Activated CD8-positive, alpha-beta T cell treated with anti-CD3 and anti-CD28 coated beads for 36 hours (primary cell): ENCODE measurements at regions of chr11 and their contacts with region 1.

Region 1: DNA sequence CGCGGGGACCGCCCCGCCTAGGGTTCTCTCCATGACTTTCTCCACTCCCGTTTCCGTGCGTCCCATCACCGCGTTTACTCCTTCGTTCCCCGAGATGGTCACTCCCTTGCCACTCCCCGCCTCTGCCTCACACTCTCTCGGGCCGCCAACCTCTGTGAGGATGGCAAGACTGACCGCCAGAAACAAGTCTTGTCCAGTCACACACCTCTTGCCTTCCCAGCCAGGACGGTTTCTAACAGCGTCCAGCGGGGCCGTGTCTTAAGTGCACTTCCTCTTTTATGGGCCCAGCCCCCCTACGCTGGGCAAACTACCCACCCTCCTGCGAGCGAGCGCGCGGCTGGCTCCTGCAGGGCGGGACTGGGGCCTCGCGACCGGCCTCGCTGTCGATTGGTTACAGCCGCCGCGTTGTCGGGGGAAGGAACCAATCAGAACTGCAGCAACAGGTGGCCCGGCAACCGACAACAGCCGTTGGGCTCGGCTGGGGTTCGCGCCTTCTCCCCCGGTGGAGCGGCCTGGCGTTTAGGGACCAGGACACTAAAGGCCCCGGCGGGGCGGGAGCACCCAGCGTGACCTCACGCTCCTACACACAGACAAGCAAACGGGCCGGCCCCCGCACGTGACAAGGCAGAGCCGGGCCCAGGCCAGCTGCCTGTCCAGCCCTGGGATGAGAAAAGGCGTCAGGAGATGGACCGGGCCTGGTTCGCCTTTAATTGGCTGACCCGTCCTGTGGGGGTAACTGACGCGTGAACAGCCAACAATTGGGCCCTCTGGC is 512 bp upstream of the UCP2 start:
- DNase-seq: peak; percentile 97
- ATAC-seq: peak; percentile 85
- H3K4me3 Mint-ChIP-seq: peak overlapping the region; percentile 86
- H3K27ac Mint-ChIP-seq: peak overlapping the region; percentile 95
- H3K4me1 Mint-ChIP-seq: peaks cover 41% of the 10 kb centered on the region
- H3K27me3 Mint-ChIP-seq: no peaks in the 10 kb centered on the region
- CTCF ChIP-seq: no peak

Region 2: DNA sequence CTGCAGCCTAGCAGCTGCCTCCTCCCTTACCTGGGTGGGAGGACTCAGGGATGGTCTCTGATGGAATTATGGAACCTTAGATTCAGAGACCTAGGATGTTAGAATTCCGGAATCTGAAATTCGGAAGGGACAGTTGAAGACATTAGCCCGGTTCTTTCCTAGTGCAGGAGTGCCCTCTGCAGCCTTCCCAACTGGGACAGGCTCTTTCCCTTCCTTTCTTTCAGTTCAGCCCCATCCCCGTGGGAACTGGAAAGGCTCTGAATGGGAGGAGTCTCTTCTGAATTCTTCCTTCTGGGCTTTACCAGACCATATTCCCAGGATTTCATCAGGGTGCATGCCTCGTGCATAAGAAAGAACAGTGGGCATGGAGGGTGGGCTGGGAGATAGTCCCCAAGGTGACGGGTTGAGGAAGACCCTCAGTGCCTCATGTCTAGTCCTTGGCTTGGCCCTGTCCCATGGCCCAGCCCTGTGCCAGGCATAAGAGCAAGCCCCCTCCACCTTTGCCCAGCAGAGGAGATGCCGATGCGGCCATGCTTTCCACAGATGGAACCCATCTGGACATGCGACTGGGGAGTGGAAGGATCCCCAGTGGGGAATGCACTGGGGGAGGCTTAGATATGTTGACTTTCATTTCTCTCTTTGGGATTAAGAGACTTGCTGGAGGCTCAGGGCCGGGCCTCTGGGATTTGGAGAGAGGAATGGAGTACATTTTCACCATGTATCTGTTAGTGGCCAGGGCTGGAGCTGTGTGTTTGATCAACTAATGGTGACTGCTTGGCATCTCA is 17.9 kb before region 1 on chr11:
- CTCF ChIA-PET with region 1: interaction called, 17 read pairs
- POLR2A ChIA-PET with region 1: interaction called, 80 read pairs
- intact Hi-C with region 1: no loop called
- DNase-seq: no peak
- ATAC-seq: no peak
- H3K4me3 Mint-ChIP-seq: no peak overlapping the region
- H3K27ac Mint-ChIP-seq: no peak overlapping the region
- H3K4me1 Mint-ChIP-seq: peaks cover 42% of the 10 kb centered on the region
- H3K27me3 Mint-ChIP-seq: no peaks in the 10 kb centered on the region
- CTCF ChIP-seq: no peak

Region 3: GRCh38 chr11:74004759-74005615 is 21.8 kb after region 1 on chr11:
- CTCF ChIA-PET with region 1: interaction called, 7 read pairs
- POLR2A ChIA-PET with region 1: interaction called, 269 read pairs
- intact Hi-C with region 1: no loop called
- DNase-seq: peak; percentile 96
- ATAC-seq: peak; percentile 99
- H3K4me3 Mint-ChIP-seq: peak overlapping the region; percentile 65
- H3K27ac Mint-ChIP-seq: peak overlapping the region; percentile 91
- H3K4me1 Mint-ChIP-seq: peaks cover 82% of the 10 kb centered on the region
- H3K27me3 Mint-ChIP-seq: no peaks in the 10 kb centered on the region
- CTCF ChIP-seq: no peak

Region 4: GRCh38 chr11:74018331-74019005 is 35.3 kb after region 1 on chr11:
- CTCF ChIA-PET with region 1: interaction called, 6 read pairs
- POLR2A ChIA-PET with region 1: interaction called, 269 read pairs
- intact Hi-C with region 1: loop called (anchors 5 kb)
- DNase-seq: no peak
- ATAC-seq: no peak
- H3K4me3 Mint-ChIP-seq: no peak overlapping the region
- H3K27ac Mint-ChIP-seq: no peak overlapping the region
- H3K4me1 Mint-ChIP-seq: peaks cover 34% of the 10 kb centered on the region
- H3K27me3 Mint-ChIP-seq: no peaks in the 10 kb centered on the region
- CTCF ChIP-seq: no peak

Region 5: GRCh38 chr11:74102321-74102720 is 119.2 kb after region 1 on chr11:
- CTCF ChIA-PET with region 1: no interaction called
- POLR2A ChIA-PET with region 1: no interaction called
- intact Hi-C with region 1: no loop called
- DNase-seq: no peak
- ATAC-seq: no peak
- H3K4me3 Mint-ChIP-seq: no peak overlapping the region
- H3K27ac Mint-ChIP-seq: no peak overlapping the region
- H3K4me1 Mint-ChIP-seq: no peaks in the 10 kb centered on the region
- H3K27me3 Mint-ChIP-seq: no peaks in the 10 kb centered on the region
- CTCF ChIP-seq: no peak

Region 6: GRCh38 chr11:74170694-74171629 is 187.8 kb after region 1 on chr11 and contains the starts of genes C2CD3 and PPME1:
- CTCF ChIA-PET with region 1: no interaction called
- POLR2A ChIA-PET with region 1: no interaction called
- intact Hi-C with region 1: loop called (anchors 10 kb)
- DNase-seq: peak; percentile 99
- ATAC-seq: peak; percentile 95
- H3K4me3 Mint-ChIP-seq: no peak within 1 kb of the TSS
- H3K27ac Mint-ChIP-seq: no peak within 1 kb of the TSS
- H3K4me1 Mint-ChIP-seq: peaks cover 22% of the 10 kb centered on the region
- H3K27me3 Mint-ChIP-seq: no peaks in the 10 kb centered on the region
- CTCF ChIP-seq: no peak
- total RNA-seq, gene C2CD3: 22.5 to 25.6 TPM
- total RNA-seq, gene PPME1: 63.7 to 64.9 TPM